Posterior cingulate gyrus (tissue), 11 donors: ENCODE measurements at regions of chr21 and their contacts with region 1.

Region 1: GRCh38 chr21:32666258-32666657 is 54.1 kb upstream of the CFAP298 start:
- DNase-seq: no peak

Region 2: DNA sequence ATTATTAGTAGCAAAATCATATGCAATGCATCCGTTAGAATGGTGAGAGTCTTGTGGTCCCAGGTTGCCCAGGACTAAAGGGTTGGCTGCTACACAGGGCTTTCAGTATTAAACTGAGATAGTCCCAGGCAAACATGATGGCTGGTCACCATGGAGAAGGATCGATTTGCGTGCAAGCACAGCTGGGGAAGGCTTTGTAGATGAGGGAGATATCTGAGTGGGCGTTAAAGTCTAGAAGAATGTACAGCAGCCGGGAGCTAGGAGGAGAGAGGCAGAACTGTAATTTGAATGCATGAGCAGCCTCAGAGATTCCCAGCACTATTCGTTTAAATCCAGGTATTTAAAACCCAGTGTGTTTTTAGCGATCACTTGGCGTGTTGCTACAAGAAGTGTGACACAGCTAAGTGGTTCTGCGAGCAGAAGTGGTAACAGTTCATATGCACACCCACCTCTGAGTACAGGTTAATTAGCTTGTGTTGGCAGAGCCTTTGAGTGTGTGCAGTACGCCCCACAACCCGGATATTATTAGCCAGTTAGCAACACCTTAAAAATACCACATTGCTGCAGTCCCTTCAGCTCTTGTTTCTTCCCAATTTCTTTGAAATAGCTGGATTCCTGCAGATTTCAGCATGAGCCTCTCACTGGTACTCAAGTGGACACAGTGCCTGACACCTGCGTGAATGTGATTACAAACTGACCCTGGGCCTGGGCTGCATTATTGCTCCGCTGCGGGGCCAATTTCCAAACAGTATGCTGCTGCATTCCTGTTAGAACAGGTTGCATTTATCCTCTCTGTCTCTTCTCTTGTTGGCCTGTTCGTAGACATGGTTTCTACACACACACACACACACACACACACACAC is 867.2 kb before region 1 on chr21:
- intact Hi-C with region 1: no loop called
- DNase-seq: peak in 1 of 10 donors; percentile 5

Region 3: DNA sequence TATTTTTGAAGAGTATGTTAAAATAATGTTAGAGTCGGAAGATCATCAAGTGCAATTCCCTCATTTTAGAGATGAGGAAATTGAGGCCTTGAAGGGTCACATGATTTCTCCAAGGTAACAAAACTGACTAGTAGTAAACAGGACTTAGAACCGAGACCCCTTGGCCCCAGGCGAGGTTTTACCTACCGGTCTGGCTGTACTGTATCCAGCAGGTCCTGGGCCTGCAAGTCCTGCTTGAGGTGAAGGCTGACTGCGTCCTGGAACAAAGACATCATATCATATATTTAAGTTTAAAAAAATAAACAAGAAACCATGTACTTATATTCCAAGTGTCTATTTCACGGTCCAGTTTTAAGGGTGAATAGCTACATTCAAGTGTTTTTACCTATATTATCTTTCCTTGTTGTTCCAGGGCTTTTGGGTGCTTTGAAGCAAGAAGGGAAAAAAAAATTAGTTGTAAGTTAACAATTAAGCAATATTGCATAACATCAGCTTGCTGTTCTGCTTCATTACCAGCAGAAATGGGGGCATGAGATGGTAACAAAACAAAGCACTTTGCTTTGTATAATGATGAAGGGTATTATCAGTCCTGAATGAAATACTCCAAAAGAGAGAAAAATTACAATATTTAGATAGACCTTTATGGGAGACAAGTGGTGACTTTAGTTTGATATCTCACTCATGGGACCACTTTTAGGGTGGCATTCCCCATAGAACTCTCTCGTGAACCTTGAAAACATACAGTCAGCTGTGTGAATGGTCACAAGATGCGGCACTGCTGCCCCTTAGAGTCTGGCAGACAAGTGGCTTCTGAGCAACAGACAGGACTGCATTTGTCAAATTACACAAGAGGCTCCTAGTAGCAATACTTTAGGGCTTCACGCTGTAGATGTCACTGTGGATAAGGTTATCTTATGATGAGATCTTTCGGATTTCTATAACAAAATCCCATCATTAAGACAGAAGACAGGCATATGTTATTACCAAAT is 24.3 kb before region 1 on chr21:
- intact Hi-C with region 1: loop called (anchors 2 kb)
- DNase-seq: no peak